Posterior vena cava (tissue), 2 donors: ENCODE measurements at regions of chr10 and their contacts with region 1.

Region 1: GRCh38 chr10:10869592-10869991 is 148.1 kb upstream of the CELF2 start:
- DNase-seq: no peak

Region 2: DNA sequence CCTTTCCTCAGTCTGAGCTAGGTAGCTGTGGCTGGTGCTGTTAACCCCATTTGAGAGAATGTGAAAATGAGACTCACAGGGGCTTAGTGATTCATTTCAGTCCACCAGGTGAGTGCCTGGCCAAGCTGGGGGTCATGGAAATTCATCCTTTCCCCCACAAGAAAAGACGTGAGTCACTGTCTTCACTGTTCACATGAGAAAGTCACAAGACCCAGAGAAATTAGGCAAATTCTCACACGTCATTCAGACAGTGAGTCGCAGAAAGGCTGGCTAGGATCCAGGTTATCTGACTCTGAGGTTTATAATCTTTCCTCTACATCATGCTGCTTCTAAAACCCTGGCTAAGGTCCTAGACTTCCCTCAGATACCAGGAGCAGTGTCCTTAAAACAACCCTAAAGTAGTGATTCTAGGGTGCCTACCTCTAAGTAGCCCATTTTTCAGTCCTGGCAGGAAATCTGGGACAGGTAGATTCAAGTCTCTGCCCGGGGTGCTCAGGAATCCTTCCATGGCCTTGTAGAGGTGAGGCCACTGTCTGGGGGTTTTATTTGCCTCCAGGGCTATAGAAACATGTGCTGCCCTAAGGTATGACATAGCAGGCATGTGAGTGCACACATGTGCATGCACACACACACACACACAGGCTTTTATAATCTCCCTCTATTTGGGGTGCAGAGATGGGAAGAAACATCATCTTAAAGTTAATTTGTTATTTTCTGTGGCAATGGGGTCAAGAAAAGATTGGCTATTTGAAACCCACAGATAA is 279.9 kb before region 1 on chr10:
- intact Hi-C with region 1: loop called in 1 of 2 experiments (anchors 10 kb)
- DNase-seq: no peak

Region 3: DNA sequence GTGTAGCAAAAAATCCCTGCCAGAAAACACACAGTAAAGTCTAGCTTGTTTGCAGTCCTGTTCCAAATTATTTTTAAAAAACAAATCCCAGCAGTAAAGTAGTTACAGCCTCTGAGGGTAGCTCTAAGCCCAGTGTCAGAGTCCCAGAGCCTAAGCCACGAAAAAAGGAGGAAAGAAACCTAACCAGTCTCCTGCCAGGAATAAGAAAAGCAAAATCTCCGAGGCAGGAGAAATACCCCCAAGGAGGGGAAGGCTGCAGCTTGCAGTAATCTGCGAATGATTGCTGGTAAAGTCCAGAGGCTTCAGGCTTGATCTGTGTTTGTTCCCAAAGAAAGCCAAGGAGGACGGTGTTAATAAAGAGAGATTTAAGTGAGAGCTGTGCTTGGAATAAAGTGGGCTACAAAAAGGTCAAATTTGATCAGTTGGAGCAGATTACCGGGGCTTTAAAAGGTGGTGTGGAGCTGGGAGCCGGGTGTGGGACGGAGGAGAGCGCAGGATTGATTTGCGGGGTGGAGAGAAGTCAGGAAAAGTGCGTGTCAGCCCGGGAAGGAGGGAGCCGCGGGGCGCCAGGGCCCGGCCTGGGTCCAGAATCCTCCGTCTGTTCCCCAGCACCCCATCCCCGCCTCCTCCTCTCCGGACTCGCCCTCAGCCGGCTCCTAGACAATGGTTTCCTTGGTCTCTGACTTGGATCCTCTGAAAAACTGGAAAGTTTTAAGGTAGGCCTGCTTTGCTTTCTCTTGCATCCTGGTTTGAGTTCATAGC is 71.3 kb before region 1 on chr10:
- intact Hi-C with region 1: loop called in 1 of 2 experiments (anchors 5 kb)
- DNase-seq: no peak

Region 4: DNA sequence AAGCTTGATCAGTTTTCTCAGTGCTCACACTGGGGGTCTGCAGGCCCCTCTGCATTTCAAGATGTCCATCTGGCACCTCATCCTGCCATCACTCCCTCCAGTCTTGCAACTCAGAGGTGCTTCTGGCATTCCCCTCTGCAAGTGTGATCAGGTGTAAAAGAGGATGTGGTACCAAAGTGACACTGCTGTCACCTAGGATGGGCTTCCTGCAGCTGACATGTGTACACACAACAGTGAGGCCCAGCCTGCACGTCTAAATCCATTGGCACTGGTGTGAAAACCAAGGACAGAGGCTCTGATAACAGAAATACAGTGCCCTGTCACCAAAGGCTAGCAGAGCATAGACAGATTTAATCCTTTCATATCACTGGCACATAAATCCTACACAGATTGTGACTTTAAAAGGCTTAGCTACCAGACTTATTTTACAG is 14.4 kb before region 1 on chr10:
- intact Hi-C with region 1: no loop called
- DNase-seq: no peak